Natural killer cell (primary cell): ENCODE measurements at regions of chr6 and their contacts with region 1.

Region 1: GRCh38 chr6:90080876-90081481 is 186.7 kb downstream of the GJA10 start:
- DNase-seq: peak; percentile 42 to 84
- ATAC-seq: peak; percentile 75 to 83 (median 79)
- H3K4me3 ChIP-seq: peak overlapping the region; percentile 36
- H3K4me3 Mint-ChIP-seq: peak overlapping the region; percentile 94
- H3K27ac ChIP-seq: peak overlapping the region; percentile 76
- H3K27ac Mint-ChIP-seq: peak overlapping the region; percentile 92 to 94
- H3K4me1 ChIP-seq: peaks cover 17% of the 10 kb centered on the region
- H3K4me1 Mint-ChIP-seq: peaks cover 65 to 67% of the 10 kb centered on the region in 2 donors
- H3K27me3 ChIP-seq: no peaks in the 10 kb centered on the region
- H3K27me3 Mint-ChIP-seq: no peaks in the 10 kb centered on the region
- CTCF ChIP-seq: no peak

Region 2: DNA sequence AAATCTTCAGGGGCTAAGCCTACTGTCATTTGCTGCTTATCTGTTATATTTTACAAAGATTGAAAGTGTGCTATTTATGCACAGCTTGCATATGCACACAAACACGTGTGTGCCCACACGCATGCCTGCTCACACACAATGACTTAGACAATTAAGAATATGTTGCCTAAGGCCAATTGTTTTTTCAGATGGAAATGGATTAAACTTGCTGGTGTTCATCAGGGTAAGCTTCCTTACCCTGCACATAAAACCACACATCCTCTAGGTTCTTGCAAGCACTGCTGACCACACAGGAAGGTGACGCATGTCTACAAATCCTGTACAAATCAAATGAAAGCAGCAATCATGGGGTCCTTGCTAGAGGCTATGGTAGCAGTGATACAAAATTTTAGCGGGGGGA is 128.3 kb before region 1 on chr6:
- intact Hi-C with region 1: loop called (anchors 1 kb)
- DNase-seq: peak; percentile 32 to 87
- ATAC-seq: peak; percentile 86 to 91 (median 87)
- H3K4me3 ChIP-seq: no peak overlapping the region
- H3K4me3 Mint-ChIP-seq: peak overlapping the region; percentile 81
- H3K27ac ChIP-seq: peak overlapping the region; percentile 57
- H3K27ac Mint-ChIP-seq: peak overlapping the region; percentile 81 to 87
- H3K4me1 ChIP-seq: peaks cover 49% of the 10 kb centered on the region
- H3K4me1 Mint-ChIP-seq: peaks cover 49 to 53% of the 10 kb centered on the region in 2 donors
- H3K27me3 ChIP-seq: no peaks in the 10 kb centered on the region
- H3K27me3 Mint-ChIP-seq: no peaks in the 10 kb centered on the region
- CTCF ChIP-seq: no peak

Region 3: GRCh38 chr6:90025523-90026061 is 55.4 kb before region 1 on chr6:
- intact Hi-C with region 1: no loop called
- DNase-seq: peak in 1 of 2 donors; percentile 31
- ATAC-seq: no peak
- H3K4me3 ChIP-seq: no peak overlapping the region
- H3K4me3 Mint-ChIP-seq: no peak overlapping the region
- H3K27ac ChIP-seq: no peak overlapping the region
- H3K27ac Mint-ChIP-seq: peak overlapping the region in 1 of 2 donors; percentile 17
- H3K4me1 ChIP-seq: peaks cover 15% of the 10 kb centered on the region
- H3K4me1 Mint-ChIP-seq: peaks cover 51 to 55% of the 10 kb centered on the region in 2 donors
- H3K27me3 ChIP-seq: no peaks in the 10 kb centered on the region
- H3K27me3 Mint-ChIP-seq: no peaks in the 10 kb centered on the region
- CTCF ChIP-seq: no peak

Region 4: GRCh38 chr6:90110971-90111370 is 30.0 kb after region 1 on chr6:
- intact Hi-C with region 1: loop called (anchors 1 kb)
- DNase-seq: peak; percentile 63 to 82
- ATAC-seq: peak; percentile 81 to 91 (median 81)
- H3K4me3 ChIP-seq: no peak overlapping the region
- H3K4me3 Mint-ChIP-seq: no peak overlapping the region
- H3K27ac ChIP-seq: no peak overlapping the region
- H3K27ac Mint-ChIP-seq: peak overlapping the region; percentile 21 to 37
- H3K4me1 ChIP-seq: peaks cover 28% of the 10 kb centered on the region
- H3K4me1 Mint-ChIP-seq: peaks cover 34% of the 10 kb centered on the region in 2 donors
- H3K27me3 ChIP-seq: no peaks in the 10 kb centered on the region
- H3K27me3 Mint-ChIP-seq: peaks cover 0 to 8% of the 10 kb centered on the region in 2 donors
- CTCF ChIP-seq: no peak

Region 5: DNA sequence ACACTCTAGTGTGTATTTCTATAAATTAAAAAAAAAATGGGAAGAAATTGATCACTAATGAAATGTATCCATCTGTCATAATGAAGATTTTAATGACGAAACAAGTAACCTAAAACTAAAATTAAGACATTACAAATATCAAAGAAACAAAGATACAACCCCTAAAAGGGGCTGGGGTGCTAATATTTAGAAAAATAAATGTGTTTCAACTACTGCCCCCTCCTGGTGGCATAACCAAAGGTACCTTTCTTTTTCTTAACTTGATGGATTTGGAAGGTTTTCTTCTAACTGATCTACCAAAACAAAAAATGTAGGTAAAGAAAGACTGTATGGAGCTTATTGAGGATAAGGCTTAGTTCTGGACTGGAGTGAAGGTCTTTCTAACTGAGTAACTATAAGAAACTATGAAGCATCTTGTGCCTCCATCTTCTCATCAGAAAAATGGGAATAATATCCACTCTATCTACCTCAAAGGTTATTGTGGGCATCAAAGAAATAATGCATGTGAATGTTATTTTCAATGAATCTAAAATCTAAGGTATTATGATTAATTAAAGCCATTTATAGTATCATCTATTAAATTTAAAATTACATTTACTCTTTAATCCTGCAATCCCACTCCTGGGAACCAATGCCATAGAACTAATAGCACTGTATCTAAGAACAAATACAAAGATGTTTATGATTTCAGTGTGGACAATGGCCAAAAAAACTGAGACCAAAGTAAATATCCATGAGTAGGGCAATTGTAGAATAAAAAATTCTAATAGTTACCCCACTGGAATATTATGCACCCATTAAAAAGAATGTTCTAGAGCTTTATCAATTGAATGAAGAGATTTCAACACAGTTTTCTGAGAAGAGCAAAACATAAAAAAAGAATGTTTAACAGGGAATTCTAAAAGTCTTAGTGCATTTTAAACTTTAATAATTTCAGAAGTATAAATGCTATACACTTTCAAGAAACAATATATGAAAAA is 98.5 kb after region 1 on chr6:
- intact Hi-C with region 1: loop called (anchors 5 kb)
- DNase-seq: peak in 1 of 2 donors; percentile 70
- ATAC-seq: no peak
- H3K4me3 ChIP-seq: no peak overlapping the region
- H3K4me3 Mint-ChIP-seq: no peak overlapping the region
- H3K27ac ChIP-seq: no peak overlapping the region
- H3K27ac Mint-ChIP-seq: no peak overlapping the region
- H3K4me1 ChIP-seq: peaks cover 30% of the 10 kb centered on the region
- H3K4me1 Mint-ChIP-seq: peaks cover 27 to 39% of the 10 kb centered on the region in 2 donors
- H3K27me3 ChIP-seq: no peaks in the 10 kb centered on the region
- H3K27me3 Mint-ChIP-seq: no peaks in the 10 kb centered on the region
- CTCF ChIP-seq: peak; percentile 76

Region 6: GRCh38 chr6:90216072-90216977 is 135.3 kb after region 1 on chr6:
- intact Hi-C with region 1: loop called (anchors 5 kb)
- DNase-seq: peak in 1 of 2 donors; percentile 81
- ATAC-seq: peak in 1 of 3 donors; percentile 20
- H3K4me3 ChIP-seq: no peak overlapping the region
- H3K4me3 Mint-ChIP-seq: no peak overlapping the region
- H3K27ac ChIP-seq: peak overlapping the region; percentile 82
- H3K27ac Mint-ChIP-seq: peak overlapping the region in 1 of 2 donors; percentile 63
- H3K4me1 ChIP-seq: peaks cover 36% of the 10 kb centered on the region
- H3K4me1 Mint-ChIP-seq: peaks cover 0 to 9% of the 10 kb centered on the region in 2 donors
- H3K27me3 ChIP-seq: no peaks in the 10 kb centered on the region
- H3K27me3 Mint-ChIP-seq: no peaks in the 10 kb centered on the region
- CTCF ChIP-seq: no peak

Region 7: GRCh38 chr6:90296346-90297114 is 215.6 kb after region 1 on chr6 and contains the start of gene BACH2:
- intact Hi-C with region 1: loop called (anchors 5 kb)
- DNase-seq: peak; percentile 84 to 97
- ATAC-seq: peak; percentile 68 to 81 (median 72)
- H3K4me3 ChIP-seq: peak within 1 kb of the TSS; percentile 67
- H3K4me3 Mint-ChIP-seq: peak within 1 kb of the TSS; percentile 94
- H3K27ac ChIP-seq: peak within 1 kb of the TSS; percentile 79
- H3K27ac Mint-ChIP-seq: peak within 1 kb of the TSS; percentile 83 to 86
- H3K4me1 ChIP-seq: peaks cover 19% of the 10 kb centered on the region
- H3K4me1 Mint-ChIP-seq: peaks cover 11 to 21% of the 10 kb centered on the region in 2 donors
- H3K27me3 ChIP-seq: peaks cover 3% of the 10 kb centered on the region
- H3K27me3 Mint-ChIP-seq: peaks cover 13 to 30% of the 10 kb centered on the region in 2 donors
- CTCF ChIP-seq: no peak
- total RNA-seq, gene BACH2: 32.1 to 37.8 (median 32.7) TPM

Region 8: GRCh38 chr6:90478789-90479602 is 398.0 kb after region 1 on chr6:
- intact Hi-C with region 1: loop called (anchors 5 kb)
- DNase-seq: peak; percentile 68 to 92
- ATAC-seq: peak; percentile 92 to 97 (median 97)
- H3K4me3 ChIP-seq: no peak overlapping the region
- H3K4me3 Mint-ChIP-seq: no peak overlapping the region
- H3K27ac ChIP-seq: no peak overlapping the region
- H3K27ac Mint-ChIP-seq: peak overlapping the region in 1 of 2 donors; percentile 87
- H3K4me1 ChIP-seq: peaks cover 13% of the 10 kb centered on the region
- H3K4me1 Mint-ChIP-seq: peaks cover 11 to 12% of the 10 kb centered on the region in 2 donors
- H3K27me3 ChIP-seq: no peaks in the 10 kb centered on the region
- H3K27me3 Mint-ChIP-seq: no peaks in the 10 kb centered on the region
- CTCF ChIP-seq: peak; percentile 93